Ascending aorta (tissue), 2 donors: ENCODE measurements at regions of chr6 and their contacts with region 1.

Region 1: DNA sequence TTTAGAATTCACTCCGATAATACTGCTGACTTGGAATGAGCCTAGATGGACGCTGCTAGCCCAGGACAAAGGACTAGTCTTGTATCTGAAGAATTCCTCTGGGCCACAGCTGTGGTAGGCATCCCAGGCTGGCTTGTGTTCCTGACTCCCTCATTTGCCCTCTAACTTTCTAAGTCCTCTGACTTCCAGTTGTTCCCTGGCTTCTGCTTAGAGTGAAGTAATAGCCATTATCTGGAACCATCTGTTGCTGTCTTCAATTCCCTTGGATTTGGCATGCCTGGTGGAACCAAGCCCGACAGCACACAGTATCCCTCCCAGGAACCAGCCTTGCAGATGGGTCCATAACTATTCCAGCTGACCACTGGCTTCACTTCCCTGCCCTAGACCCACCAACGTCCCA is 376.0 kb downstream of the SYNE1 start:
- DNase-seq: no peak
- H3K4me3 ChIP-seq: no peak overlapping the region
- H3K27ac ChIP-seq: peak overlapping the region in 1 of 2 donors; percentile 28
- H3K4me1 ChIP-seq: peaks cover 0 to 12% of the 10 kb centered on the region in 2 donors
- H3K27me3 ChIP-seq: no peaks in the 10 kb centered on the region
- CTCF ChIP-seq: no peak

Region 2: GRCh38 chr6:151958331-151958730 is 302.8 kb before region 1 on chr6:
- intact Hi-C with region 1: no loop called
- DNase-seq: no peak
- H3K4me3 ChIP-seq: no peak overlapping the region
- H3K27ac ChIP-seq: no peak overlapping the region
- H3K4me1 ChIP-seq: no peaks in the 10 kb centered on the region
- H3K27me3 ChIP-seq: no peaks in the 10 kb centered on the region
- CTCF ChIP-seq: no peak

Region 3: DNA sequence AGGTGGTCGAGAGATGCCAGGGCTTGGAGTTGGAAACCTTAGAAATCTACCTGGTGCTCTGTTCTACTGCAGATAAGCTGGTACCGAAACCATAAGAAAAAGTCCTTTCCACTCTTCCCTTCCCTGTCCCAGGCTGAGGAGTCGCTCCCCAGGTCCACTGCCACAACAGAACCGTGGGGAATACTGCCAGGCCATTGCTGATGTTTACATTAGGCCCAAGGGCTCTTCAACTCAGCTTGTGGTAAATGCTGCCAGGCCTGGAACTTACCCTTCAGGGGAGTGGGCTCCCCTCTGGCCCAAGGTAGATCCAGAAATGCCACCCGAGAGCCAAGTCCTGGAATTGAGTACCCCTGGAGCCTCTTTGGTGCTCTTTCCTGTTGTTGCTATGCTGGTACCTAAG is 65.3 kb before region 1 on chr6:
- intact Hi-C with region 1: no loop called
- DNase-seq: no peak
- H3K4me3 ChIP-seq: no peak overlapping the region
- H3K27ac ChIP-seq: no peak overlapping the region
- H3K4me1 ChIP-seq: no peaks in the 10 kb centered on the region
- H3K27me3 ChIP-seq: no peaks in the 10 kb centered on the region
- CTCF ChIP-seq: no peak

Region 4: GRCh38 chr6:152206072-152206818 is 54.9 kb before region 1 on chr6:
- intact Hi-C with region 1: loop called (anchors 5 kb)
- DNase-seq: no peak
- H3K4me3 ChIP-seq: no peak overlapping the region
- H3K27ac ChIP-seq: peak overlapping the region; percentile 29 to 47
- H3K4me1 ChIP-seq: peaks cover 0 to 6% of the 10 kb centered on the region in 2 donors
- H3K27me3 ChIP-seq: no peaks in the 10 kb centered on the region
- CTCF ChIP-seq: peak in 2 of 3 experiments; percentile 23 to 40

Region 5: GRCh38 chr6:152220786-152221185 is 40.4 kb before region 1 on chr6:
- intact Hi-C with region 1: no loop called
- DNase-seq: no peak
- H3K4me3 ChIP-seq: no peak overlapping the region
- H3K27ac ChIP-seq: no peak overlapping the region
- H3K4me1 ChIP-seq: no peaks in the 10 kb centered on the region
- H3K27me3 ChIP-seq: no peaks in the 10 kb centered on the region
- CTCF ChIP-seq: no peak